ENCODE measurements at regions of chr2 and their contacts with region 1.

Region 1: DNA sequence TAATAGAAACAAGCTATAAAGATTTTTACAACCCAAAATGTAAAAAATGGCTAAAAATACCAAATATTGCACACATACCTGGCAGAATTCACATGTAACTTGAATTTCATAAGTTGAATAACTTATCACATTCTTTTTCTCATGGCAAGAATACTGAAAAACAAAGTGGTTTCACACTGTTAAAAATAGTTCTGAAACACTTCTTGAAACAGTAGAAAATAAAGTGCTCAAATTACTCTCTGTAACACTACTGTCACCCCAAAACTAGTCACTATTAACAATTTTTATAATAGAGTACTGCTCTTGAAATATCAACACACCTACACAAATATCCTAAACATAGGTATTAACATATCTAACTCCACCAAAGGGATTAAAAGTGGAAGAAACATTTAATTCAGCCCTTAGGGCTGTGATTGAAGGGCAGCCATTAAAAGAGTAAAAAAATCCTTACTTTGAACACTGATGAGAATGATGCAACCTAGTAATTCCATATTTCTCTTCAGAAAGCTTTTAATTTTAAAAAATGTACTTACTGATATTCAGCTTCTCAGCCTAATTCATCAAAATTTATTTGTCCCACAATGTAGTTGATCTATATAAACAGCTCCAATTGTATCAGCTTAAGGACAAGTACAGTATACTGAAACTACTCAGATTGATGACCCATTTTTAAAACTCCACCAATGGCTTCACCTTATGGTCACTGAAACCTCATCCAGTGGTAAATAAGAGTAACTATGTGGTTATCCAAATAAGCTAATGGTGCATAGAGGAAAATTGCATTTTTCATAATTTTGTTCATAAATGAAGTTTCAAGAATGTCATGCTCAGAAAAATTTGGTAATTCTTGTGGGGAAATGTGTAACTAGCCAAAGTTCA is 31.4 kb downstream of the ATF2 start:
- DNase-seq: no peak
- H3K4me3 ChIP-seq: no peak overlapping the region
- H3K27ac ChIP-seq: no peak overlapping the region
- H3K4me1 ChIP-seq: peaks cover 14% of the 10 kb centered on the region
- CTCF ChIP-seq: no peak

Region 2: GRCh38 chr2:175154661-175155082 is 18.1 kb after region 1 on chr2:
- CTCF ChIA-PET with region 1: no interaction called
- POLR2A ChIA-PET with region 1: interaction called, 37 read pairs
- intact Hi-C with region 1: no loop called
- DNase-seq: no peak
- H3K4me3 ChIP-seq: no peak overlapping the region
- H3K27ac ChIP-seq: no peak overlapping the region
- H3K4me1 ChIP-seq: no peaks in the 10 kb centered on the region
- CTCF ChIP-seq: no peak

Measured in OCI-LY7 (cell line).